ENCODE measurements at regions of chrX and their contacts with region 1.

Region 1: DNA sequence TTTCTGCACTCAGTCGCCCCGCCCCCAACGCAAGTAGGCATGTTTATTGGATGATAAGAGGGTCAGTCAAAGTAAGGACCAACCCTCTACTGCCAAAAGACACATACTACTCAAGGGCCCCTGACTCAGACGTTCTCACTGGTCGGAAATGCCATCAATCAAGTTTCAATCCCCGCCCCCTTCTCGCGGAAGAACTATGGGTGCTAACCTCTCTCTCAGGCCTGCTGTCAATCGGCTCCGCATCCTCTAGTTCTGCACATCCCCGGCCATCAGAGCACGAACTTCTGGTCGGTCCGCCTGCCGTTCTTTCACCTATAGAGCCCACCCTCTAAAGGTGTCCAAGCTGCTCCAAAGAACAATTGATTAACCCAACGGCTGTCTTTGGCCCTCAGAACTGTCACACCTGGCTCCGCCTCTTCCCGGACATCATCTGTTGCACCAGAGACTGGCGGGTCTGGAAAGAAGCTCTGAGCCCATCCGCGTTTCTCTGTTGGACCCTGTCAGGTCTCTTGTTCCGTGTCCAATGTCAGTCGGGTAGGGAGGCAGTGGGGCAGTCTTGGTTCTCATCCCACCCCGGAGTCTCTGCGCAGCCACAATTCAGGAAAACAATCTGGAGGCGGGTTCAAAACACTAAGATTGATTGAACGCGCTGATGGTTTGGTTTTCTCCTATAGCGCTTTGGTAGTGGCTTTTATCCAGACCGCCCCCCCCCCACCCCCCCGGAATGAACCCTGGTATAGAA is 15.2 kb downstream of the NDUFB11 start:
- DNase-seq: peak; percentile 97
- H3K4me3 ChIP-seq: peak overlapping the region; percentile 62 to 91 (median 82)
- H3K27ac ChIP-seq: peak overlapping the region; percentile 71
- H3K4me1 ChIP-seq: no peaks in the 10 kb centered on the region
- H3K27me3 ChIP-seq: no peaks in the 10 kb centered on the region
- CTCF ChIP-seq: no peak
- POLR2A ChIP-seq: peak; percentile 71

Region 2: GRCh38 chrX:47144626-47145394 is 15.5 kb after region 1 on chrX and contains the starts of genes NDUFB11 and RBM10:
- CTCF ChIA-PET with region 1: interaction called, 11 read pairs
- POLR2A ChIA-PET with region 1: no interaction called
- dilution Hi-C with region 1: no loop called
- intact Hi-C with region 1: loop called (anchors 1 kb)
- DNase-seq: peak; percentile 94
- H3K4me3 ChIP-seq: peak within 1 kb of the TSS; percentile 86 to 98 (median 92)
- H3K27ac ChIP-seq: peak within 1 kb of the TSS; percentile 70
- H3K4me1 ChIP-seq: peaks cover 17% of the 10 kb centered on the region
- H3K27me3 ChIP-seq: no peaks in the 10 kb centered on the region
- CTCF ChIP-seq: peak; percentile 52 to 61
- POLR2A ChIP-seq: peak; percentile 69
- total RNA-seq, gene NDUFB11: 65.2 and 79.8 TPM in 2 replicates
- total RNA-seq, gene RBM10: 49.6 and 51.5 TPM in 2 replicates

Region 3: DNA sequence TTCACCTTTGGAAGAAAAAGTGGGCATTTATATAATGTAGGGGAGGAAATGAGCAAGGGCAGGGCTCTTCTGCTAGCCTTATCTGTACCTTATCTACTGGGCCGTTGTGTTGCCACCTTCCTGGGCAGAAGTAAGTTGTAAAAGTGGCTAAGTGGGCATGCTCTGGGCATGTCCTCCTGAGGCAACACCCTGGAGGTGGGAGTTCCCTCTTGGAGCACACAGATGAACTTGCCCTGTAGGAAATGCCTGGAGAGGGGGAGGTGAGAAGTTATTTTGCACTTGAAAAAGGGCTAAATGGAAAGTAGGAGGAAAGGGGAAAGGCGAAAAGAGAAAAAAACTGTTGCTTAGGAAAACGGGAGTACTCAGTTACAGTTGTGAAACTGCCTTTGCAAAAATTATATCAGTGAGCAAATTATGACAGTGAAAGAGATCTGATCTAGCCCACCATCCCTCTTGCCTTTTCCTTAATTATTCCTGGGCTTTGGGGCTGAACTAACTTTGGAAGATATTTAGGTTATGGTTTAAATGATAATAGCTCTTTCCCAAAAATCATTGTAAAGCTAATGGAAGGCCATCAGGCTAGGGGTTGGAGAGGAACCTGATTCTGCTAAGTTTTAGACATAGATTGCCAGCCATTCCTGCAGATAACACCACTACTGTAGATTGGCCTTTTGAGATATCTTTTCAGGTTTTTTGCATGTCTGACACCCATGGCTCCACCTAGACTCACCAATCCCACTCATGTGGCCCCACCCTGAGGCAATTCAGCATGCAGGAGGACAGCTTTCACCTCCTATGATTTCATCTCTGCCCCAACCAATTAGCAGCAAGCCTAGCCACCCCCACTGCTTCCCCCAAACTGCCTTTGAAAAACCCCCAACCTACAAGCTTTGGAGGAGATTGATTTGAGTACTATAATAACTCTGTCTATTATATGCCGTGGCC is 686.8 kb after region 1 on chrX:
- CTCF ChIA-PET with region 1: no interaction called
- POLR2A ChIA-PET with region 1: no interaction called
- dilution Hi-C with region 1: no loop called
- intact Hi-C with region 1: no loop called
- DNase-seq: peak; percentile 58
- H3K4me3 ChIP-seq: no peak overlapping the region
- H3K27ac ChIP-seq: no peak overlapping the region
- H3K4me1 ChIP-seq: peaks cover 4% of the 10 kb centered on the region
- H3K27me3 ChIP-seq: no peaks in the 10 kb centered on the region
- CTCF ChIP-seq: no peak
- POLR2A ChIP-seq: no peak

Measured in endothelial cell of umbilical vein (primary cell).